ENCODE measurements at regions of chr7 and their contacts with region 1.

Region 1: GRCh38 chr7:2519119-2519930 is at the start of gene LFNG:
- DNase-seq: peak; percentile 84
- H3K4me3 Mint-ChIP-seq: peak within 1 kb of the TSS; percentile 97
- H3K27ac Mint-ChIP-seq: peak within 1 kb of the TSS; percentile 91
- H3K4me1 Mint-ChIP-seq: peaks cover 35% of the 10 kb centered on the region
- H3K27me3 Mint-ChIP-seq: no peaks in the 10 kb centered on the region
- total RNA-seq, gene LFNG: 34.8 and 34.9 TPM in 2 replicates

Region 2: DNA sequence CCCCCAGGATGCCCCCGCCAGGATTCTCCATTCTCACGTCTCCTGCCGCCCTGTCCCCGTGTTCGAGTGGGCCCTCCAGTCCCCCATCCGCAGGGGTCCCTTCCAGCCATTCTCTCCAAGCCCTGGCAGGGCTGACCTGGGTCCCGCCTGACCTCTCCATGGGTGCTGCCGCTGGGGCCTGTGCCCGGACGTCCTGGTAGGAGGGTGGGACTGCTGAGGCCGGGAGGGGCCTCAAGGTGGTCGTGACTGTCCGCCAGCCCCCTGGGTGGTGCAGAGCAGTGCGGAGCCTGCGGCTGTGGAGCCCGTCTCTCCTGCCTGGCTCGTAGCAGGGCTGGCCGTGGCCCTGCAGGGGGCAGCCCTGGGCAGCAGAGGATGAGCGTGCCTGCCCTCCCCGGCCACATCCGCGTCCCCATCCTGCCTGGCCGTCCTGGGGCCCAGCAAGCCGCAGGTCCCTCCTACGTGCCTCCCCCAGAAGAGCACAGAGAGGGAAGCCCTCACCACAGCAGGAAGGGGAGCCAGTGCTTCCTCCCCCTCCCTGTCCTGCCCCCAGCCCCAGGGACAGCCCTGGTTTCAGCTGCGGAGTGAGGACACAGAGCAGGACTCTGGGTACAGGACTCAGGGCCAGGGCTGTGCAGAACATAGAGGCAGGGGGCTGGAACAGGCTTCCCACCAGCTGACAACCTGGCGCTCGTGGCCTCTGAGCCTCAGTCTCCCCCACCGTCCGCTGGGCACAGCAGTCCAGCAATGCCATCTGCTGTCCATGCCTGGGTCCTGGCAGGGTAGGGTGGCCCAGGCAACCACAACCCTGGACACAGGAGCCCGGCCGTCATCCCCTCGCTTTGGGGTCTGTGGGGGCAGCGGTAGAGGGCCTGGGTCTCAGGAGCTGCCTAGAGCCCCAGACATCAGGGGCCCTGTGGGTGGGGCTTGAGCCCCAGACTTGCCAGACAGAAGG is 41.6 kb before region 1 on chr7:
- intact Hi-C with region 1: loop called (anchors 1 kb)
- DNase-seq: peak; percentile 52
- H3K4me3 Mint-ChIP-seq: no peak overlapping the region
- H3K27ac Mint-ChIP-seq: no peak overlapping the region
- H3K4me1 Mint-ChIP-seq: no peaks in the 10 kb centered on the region
- H3K27me3 Mint-ChIP-seq: peaks cover 5% of the 10 kb centered on the region

Region 3: DNA sequence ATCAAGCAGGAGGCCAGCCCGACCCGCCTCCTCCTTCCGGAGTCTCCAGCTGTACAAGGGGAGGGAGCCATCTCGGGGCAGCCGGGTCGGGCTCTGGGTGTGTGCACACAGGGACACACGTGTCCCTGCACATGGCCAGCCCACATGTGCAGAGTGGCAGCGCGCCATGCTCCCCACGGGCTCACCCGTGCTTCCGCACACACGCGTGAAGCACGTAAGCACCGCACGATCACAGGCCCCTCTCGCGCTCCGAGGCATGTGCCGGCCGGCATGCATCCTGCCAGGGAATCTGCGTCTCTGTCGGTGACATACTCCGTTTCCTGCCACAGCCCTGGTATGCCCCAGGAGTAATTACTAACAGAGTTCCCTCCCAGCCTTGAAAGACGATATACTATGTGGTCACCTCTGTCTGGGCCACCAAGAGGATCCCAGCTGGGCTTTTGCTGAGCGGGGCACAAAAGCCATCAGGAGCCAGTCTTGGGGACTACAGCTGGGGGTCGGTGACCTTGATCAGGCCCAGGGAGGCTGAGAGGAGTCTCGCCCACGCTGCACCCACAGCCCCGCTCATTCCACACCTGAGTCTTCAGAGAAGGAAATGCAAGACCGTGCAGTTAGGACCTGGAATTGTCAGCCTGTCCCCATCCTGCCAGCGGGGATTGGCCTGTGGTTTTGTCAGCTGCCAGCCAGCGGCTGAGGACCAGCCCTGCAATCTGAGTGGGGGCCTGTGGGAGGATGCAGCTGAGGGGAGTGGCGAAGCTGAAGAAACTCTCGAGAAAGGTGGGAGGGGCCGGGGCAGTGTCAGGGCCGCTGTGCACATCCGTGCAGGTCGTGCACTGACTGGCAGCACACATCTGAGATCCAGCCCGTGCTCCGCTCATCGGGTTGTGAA is 10.8 kb before region 1 on chr7:
- intact Hi-C with region 1: loop called (anchors 1 kb)
- DNase-seq: peak; percentile 63
- H3K4me3 Mint-ChIP-seq: peak overlapping the region; percentile 71
- H3K27ac Mint-ChIP-seq: peak overlapping the region; percentile 74
- H3K4me1 Mint-ChIP-seq: peaks cover 42% of the 10 kb centered on the region
- H3K27me3 Mint-ChIP-seq: peaks cover 5% of the 10 kb centered on the region

Region 4: DNA sequence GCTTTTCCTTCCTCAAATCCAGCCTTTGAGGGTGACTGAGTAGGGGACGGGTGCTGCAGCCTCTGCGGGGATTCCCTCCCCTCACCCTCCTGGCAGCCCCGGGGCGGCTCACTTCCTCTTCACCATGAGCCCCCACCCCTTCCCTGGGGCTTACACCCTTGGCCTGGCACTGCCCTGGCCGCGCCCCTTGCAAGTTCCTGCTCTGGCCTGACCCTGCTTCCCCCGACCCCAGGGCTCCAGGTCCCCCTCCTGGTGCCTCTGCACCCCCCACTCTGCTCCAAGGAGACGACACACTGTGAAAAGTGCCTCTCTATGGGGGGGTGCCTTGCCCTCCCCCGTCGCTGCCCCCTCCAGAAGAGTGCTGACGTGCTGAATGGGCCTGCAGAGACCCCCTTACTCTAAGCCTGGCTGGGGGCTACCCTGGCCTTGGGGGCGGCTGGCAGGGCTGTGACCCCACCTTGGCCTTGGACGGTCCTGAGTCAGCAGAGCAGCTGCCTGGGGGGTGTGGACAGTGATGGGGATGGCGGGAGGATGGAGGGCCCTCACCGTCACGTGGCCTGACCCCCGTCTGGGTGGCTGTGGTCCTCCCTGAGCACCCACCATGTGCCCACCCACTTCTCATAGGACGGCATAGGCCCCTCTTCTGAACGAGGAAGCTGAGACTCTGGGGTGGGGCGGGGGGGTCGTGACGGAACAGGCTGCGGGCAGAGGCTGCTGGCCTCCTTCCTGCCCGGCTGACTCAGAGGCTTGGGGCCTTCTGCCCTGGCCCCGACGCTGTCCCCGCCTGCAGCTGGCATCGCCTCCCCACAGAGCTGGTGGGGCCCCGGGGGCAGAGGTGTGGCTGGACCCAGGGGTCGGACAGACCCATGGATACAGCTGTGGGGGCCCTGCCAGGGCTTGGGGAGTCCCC is 10.1 kb after region 1 on chr7:
- intact Hi-C with region 1: loop called (anchors 1 kb)
- DNase-seq: peak; percentile 60
- H3K4me3 Mint-ChIP-seq: peak overlapping the region; percentile 74
- H3K27ac Mint-ChIP-seq: peak overlapping the region; percentile 97
- H3K4me1 Mint-ChIP-seq: peaks cover 34% of the 10 kb centered on the region
- H3K27me3 Mint-ChIP-seq: no peaks in the 10 kb centered on the region

Region 5: DNA sequence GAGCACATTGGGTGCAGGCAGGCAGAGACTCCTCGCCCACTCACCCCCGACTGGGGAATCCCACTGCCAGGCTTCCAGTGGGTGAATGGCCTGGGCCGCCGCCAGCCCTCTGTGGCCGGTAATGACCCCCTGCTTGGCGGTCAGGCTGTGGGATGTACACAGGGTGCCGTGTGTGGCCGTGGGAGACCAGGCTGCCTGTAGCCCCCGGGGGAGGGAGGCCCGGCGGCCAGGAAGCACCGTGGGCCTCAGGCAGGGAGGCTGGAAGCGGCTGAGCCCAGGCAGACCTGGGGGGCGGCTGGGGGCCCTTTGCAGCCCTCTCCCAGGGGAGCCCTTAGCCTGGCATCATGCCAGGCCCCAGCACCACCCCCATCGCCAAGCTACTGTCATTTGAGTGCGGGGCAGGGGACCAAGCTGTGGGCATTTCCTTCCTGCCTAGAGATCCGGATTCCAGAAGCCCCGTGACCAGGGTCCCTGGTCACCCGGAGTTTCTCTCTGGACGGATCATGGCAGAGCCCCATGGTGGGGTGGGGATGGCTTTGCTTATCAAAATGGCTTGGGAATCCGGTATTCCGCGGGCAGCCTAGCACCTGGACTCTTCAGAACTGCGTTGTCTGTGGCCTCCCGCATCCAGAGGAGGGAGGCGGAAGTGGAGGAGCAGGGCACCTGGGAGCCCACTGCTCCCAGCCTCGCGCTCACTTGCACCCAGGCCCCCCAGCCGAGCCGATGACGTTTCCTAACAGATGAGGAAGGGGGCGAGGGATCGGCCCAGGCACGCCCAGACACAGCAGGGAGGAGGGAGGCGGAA is 113.6 kb after region 1 on chr7:
- intact Hi-C with region 1: loop called (anchors 1 kb)
- DNase-seq: peak; percentile 24
- H3K4me3 Mint-ChIP-seq: peak overlapping the region; percentile 91
- H3K27ac Mint-ChIP-seq: peak overlapping the region; percentile 81
- H3K4me1 Mint-ChIP-seq: peaks cover 15% of the 10 kb centered on the region
- H3K27me3 Mint-ChIP-seq: no peaks in the 10 kb centered on the region